ENCODE measurements at regions of chr14 and their contacts with region 1.

Region 1: GRCh38 chr14:90697577-90698206 is 118.5 kb downstream of the TTC7B start:
- DNase-seq: peak; percentile 95

Region 2: GRCh38 chr14:90301668-90302090 is 396.0 kb before region 1 on chr14:
- intact Hi-C with region 1: loop called in 1 of 2 experiments (anchors 10 kb)
- DNase-seq: no peak

Region 3: GRCh38 chr14:90534091-90534837 is 163.4 kb before region 1 on chr14:
- intact Hi-C with region 1: loop called in 1 of 2 experiments (anchors 10 kb)
- DNase-seq: no peak